Common myeloid progenitor, CD34-positive (primary cell): ENCODE measurements at regions of chr2 and their contacts with region 1.

Region 1: DNA sequence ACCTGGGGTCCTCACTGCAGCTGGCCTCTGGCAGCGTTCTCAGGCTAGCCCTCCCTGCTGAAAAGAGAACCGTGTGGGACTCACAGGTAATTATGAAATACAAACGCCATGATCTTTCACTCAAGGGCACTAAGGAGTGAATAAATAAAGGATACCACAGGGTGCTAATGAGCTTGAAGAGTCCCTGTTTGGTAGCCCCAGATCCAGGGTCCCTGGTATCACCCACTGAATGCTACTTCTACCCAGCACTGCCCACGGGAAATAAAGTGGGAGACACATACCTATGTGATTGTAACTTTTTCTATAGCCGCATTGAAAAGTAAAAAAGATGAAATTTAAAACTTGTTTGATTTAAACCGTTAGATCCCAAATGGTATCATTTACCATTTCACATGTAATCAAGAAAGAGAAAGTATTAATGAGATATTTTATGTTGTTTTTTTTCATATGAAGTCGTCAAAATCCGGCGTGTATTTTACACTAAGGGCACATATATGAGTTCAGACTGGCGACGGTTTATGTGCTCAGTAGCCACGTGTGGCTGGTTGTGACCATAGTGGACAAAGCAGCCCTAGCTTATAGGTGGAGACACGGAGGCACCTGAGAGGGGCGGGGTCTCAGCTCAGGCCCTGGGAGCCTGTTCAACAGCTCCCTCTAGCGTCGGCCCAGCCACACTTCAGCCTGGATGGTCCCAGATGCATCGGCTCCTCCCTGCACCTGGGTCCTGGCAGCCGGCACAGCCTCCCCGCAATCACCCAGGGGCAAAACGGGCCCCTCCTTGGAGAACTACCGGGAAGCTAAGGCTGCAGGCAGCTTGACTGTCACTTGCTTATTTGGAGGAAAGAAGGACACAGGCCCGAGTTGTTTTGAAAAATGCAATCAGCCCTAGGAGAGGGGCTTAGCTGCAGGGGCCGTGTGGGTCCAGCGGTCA is 39.2 kb downstream of the ODC1 start:
- DNase-seq: peak; percentile 80 to 82 (median 81)
- H3K4me3 ChIP-seq: peak overlapping the region in 5 of 7 experiments; percentile 12 to 61 (median 30)
- H3K27ac ChIP-seq: peak overlapping the region in 1 of 2 experiments; percentile 47
- H3K4me1 ChIP-seq: peaks cover 14 to 63% (median 55%) of the 10 kb centered on the region in 4 experiments
- H3K27me3 ChIP-seq: no peaks in the 10 kb centered on the region

Region 2: DNA sequence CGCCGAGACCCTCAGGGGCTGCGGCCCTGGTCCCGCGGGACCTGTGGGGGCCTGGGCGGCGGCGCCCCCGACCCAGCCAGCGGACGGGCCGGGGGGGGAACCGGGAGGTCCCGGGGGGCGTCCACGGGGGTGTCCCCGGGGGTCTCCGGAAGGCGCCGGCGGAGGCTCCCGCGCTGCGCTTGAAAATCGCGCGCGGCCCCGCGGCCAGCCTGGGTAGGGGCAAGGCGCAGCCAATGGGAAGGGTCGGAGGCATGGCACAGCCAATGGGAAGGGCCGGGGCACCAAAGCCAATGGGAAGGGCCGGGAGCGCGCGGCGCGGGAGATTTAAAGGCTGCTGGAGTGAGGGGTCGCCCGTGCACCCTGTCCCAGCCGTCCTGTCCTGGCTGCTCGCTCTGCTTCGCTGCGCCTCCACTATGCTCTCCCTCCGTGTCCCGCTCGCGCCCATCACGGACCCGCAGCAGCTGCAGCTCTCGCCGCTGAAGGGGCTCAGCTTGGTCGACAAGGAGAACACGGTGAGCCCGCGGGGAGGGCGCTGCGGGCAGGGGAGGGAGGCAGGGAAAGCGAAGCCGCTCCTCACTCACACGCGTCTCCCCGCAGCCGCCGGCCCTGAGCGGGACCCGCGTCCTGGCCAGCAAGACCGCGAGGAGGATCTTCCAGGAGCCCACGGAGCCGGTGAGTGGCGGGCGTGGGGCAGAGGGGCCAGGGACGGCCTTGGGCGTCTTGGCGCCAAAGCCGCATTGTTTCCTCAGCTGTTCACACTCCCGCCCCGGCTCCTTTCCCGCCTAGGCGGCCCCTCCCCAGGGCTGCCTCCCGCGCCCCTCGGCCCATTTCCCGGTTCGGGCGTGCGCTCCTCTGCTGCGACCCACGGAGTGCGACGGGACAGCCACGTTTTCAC is 286.3 kb before region 1 on chr2 and contains the start of gene RRM2:
- CTCF ChIA-PET with region 1: interaction called, 17 read pairs
- POLR2A ChIA-PET with region 1: no interaction called
- DNase-seq: peak; percentile 85 to 94 (median 93)
- H3K4me3 ChIP-seq: peak within 1 kb of the TSS; percentile 54 to 94 (median 82)
- H3K27ac ChIP-seq: peak within 1 kb of the TSS in 1 of 2 experiments; percentile 77
- H3K4me1 ChIP-seq: peaks cover 12 to 66% (median 48%) of the 10 kb centered on the region in 4 experiments
- H3K27me3 ChIP-seq: no peaks in the 10 kb centered on the region

Region 3: DNA sequence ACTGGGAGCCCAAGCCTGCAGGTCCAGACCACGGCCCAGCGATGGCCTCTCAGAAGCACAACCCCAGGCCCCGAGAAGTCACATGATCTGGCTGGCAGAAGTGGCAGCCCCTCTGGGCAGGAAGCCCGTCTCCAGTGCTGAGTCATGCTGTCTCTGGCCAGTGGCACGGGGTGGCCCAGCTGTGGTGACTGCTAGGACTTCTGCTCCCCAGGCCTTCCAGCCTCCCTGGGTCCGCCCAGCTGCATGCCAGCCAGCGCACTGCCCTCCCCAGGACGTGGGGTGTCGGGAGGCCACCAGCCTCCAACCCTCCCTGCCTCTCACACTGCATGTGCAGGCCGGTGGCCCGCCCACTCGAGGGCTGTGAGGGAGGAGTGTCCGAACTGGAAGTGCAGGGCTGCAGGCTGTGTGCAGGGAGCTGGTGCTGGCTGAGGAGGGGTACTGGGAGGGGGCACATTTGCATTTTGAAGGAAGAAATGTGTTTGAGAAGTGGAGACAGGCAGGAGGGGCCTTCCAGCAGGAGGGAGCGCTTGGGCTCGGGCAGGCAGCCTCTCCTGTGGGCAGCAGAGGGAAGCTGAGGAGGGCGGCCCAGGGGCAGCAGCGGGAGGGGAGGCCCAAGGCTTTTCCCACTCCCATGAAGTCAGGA is 123.2 kb before region 1 on chr2:
- CTCF ChIA-PET with region 1: interaction called, 39 read pairs
- POLR2A ChIA-PET with region 1: no interaction called
- DNase-seq: peak in 2 of 3 donors; percentile 71 to 78
- H3K4me3 ChIP-seq: peak overlapping the region in 3 of 7 experiments; percentile 6 to 23 (median 19)
- H3K27ac ChIP-seq: no peak overlapping the region
- H3K4me1 ChIP-seq: peaks cover 0 to 50% (median 28%) of the 10 kb centered on the region in 4 experiments
- H3K27me3 ChIP-seq: no peaks in the 10 kb centered on the region

Region 4: DNA sequence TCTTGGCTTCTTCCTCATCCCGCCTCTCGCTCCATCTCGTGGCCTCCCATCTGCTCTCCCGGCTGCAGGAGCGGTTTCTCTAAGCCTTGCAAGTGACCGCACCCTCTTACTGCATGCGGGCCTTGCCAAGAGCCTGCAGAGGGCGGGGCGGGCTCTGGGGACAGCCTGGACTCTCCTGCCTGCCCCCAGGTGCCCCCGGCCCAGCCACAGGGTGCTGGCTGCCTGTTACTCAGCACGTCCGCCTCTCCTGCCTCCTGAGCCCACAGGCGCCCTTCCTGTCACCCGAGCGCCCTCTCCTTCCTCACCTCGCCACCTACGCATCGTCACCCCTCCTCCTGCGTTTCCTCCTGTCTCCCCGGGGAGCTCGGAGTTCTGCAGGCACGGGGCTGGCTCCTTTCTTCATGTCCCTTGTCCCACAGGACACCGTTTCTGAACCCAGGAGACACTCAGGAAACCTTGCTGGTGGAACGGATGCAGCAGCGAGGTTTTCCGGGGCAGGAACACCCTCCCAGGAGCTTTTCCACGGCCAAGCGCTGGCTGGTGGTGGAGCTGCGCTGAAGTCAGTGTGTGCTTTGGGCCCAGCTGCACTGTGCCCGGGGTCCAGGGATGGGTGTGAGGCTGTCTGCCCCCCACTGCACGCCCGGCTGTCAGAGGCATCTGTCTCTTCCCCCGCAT is 77.8 kb before region 1 on chr2:
- CTCF ChIA-PET with region 1: interaction called, 61 read pairs
- POLR2A ChIA-PET with region 1: no interaction called
- DNase-seq: peak; percentile 44 to 85 (median 61)
- H3K4me3 ChIP-seq: peak overlapping the region in 6 of 7 experiments; percentile 8 to 67 (median 54)
- H3K27ac ChIP-seq: peak overlapping the region; percentile 30 to 80
- H3K4me1 ChIP-seq: peaks cover 11 to 71% (median 59%) of the 10 kb centered on the region in 4 experiments
- H3K27me3 ChIP-seq: no peaks in the 10 kb centered on the region

Region 5: DNA sequence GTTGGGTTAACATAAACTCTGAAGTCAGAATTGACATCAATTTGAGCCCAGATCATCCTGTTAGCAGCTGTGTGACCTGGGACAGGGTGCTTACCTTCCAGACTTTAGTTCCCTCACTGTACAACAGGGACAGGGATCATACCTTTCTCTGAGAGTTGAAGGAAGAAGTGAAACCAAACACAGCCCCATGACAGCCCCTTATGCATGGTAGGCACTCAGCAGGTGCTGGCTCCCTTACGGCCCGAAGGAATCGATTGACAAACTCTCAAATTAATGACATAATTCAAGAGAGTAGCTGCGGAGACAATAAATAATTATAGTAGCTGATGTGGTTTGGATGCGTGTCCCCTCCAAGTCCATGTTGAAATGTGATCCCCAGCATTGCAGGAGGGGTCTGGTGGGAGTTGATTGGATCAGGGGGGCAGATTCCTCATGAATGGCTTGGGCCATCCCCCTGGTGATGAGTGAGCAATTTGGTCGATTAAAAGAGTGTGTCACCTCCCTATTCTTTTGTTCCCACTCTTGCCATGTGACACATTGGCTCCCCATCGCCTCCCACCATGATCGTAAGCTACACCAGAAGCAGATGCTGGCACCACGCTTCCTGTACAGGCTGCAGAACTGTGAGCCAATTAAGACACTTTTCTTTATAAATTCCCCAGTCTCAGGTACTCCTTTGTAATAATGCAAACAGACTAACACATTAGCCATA is 33.2 kb before region 1 on chr2:
- CTCF ChIA-PET with region 1: interaction called, 14 read pairs
- POLR2A ChIA-PET with region 1: interaction called, 5 read pairs
- DNase-seq: peak; percentile 66 to 98 (median 97)
- H3K4me3 ChIP-seq: peak overlapping the region in 2 of 7 experiments; percentile 6 to 20
- H3K27ac ChIP-seq: peak overlapping the region; percentile 51 to 60
- H3K4me1 ChIP-seq: peaks cover 12 to 61% (median 61%) of the 10 kb centered on the region in 4 experiments
- H3K27me3 ChIP-seq: no peaks in the 10 kb centered on the region

Region 6: DNA sequence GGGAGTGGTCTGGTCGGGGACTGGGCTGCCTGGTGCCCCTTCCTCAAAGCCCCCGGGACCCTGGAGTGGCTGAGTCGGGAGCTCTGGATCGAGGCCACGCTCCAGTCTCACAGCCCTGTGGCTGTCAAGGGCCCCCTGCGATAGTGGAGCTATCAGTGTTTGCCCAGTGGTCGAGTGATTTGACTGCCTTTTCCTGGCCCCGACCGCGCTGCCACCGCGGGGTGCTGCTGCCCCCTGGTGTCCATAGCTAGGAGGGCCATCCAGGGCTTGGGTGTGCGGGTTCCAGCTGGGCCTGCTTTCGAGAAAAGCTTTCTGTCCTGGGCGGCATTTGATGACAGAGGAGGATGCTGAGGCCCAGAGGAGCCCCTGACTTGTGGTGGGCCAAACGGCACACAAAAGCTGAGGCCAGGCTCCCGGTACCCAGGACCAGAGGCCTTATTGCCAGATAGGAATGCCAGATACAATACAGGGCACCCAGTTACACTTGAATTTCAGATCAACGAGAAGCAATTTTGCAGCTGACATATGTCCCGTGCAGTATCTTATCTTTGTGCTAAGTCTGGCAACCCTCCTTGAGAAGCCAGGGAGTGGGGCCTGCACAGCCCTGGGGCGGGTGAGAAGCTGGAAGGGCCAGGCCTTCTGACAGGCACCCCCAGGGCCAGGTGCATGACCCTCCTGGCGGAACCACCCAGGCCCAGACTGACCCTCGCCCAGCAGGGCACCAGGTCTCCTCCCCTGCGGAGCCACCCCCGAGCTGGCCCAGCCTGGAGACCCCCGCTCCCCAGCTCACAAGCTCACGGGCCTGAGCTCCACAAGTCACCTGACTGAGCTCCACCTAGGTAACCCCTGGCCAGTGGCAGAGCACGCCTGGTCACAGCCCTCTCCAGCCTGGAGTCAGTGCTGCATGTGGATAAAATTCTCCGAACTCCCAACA is 26.2 kb after region 1 on chr2:
- CTCF ChIA-PET with region 1: interaction called, 42 read pairs
- POLR2A ChIA-PET with region 1: no interaction called
- DNase-seq: peak; percentile 79 to 88 (median 85)
- H3K4me3 ChIP-seq: no peak overlapping the region
- H3K27ac ChIP-seq: no peak overlapping the region
- H3K4me1 ChIP-seq: peaks cover 0 to 14% (median 11%) of the 10 kb centered on the region in 4 experiments
- H3K27me3 ChIP-seq: peaks cover 0 to 13% (median 0%) of the 10 kb centered on the region in 5 experiments